PC-3 (cell line): ENCODE measurements at regions of chr4 and their contacts with region 1.

Region 1: DNA sequence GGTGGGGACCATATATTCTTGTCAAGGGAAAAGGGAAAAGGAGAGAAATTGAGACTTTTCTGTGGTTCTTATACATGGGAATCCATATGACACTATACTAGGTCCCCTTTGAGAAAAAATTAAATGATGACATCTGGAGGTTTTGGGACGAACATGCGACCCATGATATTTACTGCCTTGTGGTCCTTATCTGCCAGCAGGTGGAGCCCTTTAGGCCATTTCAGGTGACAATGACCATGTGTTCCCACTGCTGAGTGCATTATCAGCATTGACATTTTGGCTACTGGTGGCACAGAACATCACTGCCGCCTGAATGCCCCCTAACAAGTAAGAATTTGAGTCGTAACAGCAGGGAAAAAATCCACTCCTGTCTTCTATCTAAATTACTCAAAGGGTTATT is 843.4 kb downstream of the FSTL5 start:
- DNase-seq: peak; percentile 56
- ATAC-seq: peak; percentile 62
- H3K4me3 ChIP-seq: no peak overlapping the region
- H3K27ac ChIP-seq: no peak overlapping the region
- H3K4me1 ChIP-seq: no peaks in the 10 kb centered on the region
- H3K27me3 ChIP-seq: no peaks in the 10 kb centered on the region
- CTCF ChIP-seq: peak; percentile 67

Region 2: DNA sequence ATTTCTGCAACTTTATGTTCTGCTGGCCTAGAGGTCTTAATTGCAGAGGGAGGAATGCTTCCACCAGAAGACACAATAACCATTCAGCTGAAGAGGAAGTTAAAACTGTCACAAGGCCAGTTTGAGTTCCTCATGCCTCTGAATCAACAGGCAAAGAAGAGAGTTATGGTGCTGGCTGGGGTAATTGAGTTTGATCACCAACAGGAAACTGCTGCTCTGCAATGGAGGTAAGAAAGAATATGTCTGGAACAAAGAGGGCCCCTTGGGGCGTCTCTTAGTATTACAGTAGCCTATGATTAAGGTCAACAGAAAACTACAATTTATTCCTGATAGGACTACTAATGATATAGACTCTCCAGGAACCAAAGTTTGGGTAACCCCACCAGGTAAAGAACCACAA is 99.4 kb after region 1 on chr4:
- CTCF ChIA-PET with region 1: no interaction called
- POLR2A ChIA-PET with region 1: no interaction called
- intact Hi-C with region 1: loop called (anchors 1 kb)
- DNase-seq: peak; percentile 10
- ATAC-seq: peak; percentile 48; the same call in 1 of the 2 replicates
- H3K4me3 ChIP-seq: no peak overlapping the region
- H3K27ac ChIP-seq: no peak overlapping the region
- H3K4me1 ChIP-seq: no peaks in the 10 kb centered on the region
- H3K27me3 ChIP-seq: no peaks in the 10 kb centered on the region
- CTCF ChIP-seq: peak; percentile 45